ENCODE measurements at regions of chr13 and their contacts with region 1.

Region 1: GRCh38 chr13:42740753-42741152 is 40.6 kb upstream of the FAM216B start:
- DNase-seq: no peak
- H3K4me3 ChIP-seq: no peak overlapping the region
- H3K27me3 ChIP-seq: no peaks in the 10 kb centered on the region
- CTCF ChIP-seq: no peak

Region 2: DNA sequence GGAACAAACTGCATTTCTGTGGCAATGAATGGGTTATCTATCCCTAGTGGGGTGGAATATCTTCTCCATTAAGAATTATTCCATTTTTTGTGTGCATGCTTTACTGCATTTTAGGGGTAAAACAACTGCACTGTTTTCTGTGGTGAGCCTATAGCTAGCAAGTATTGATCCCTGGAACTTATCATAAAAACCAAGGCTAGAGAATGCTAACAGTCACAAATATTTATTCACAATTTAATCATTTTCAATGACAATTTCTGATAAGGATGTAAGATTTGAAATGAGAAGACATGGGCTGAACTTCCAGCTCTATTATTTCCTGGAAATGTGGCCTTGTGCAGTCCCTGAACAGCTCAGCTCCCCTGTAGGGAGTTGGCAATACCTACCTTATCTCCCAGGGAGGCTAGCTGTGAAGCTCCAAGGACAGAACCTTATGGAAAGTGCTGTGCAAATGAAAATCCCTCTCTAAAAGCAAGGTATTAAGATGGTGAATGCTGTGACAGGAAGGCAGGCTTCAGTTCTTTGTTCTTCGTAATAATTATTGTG is 10.8 kb before region 1 on chr13:
- CTCF ChIA-PET with region 1: interaction called, 10 read pairs
- POLR2A ChIA-PET with region 1: no interaction called
- DNase-seq: no peak
- H3K4me3 ChIP-seq: no peak overlapping the region
- H3K27me3 ChIP-seq: no peaks in the 10 kb centered on the region
- CTCF ChIP-seq: no peak

Region 3: GRCh38 chr13:43023289-43023951 is 282.7 kb after region 1 on chr13 and contains the start of gene DNAJC15:
- CTCF ChIA-PET with region 1: no interaction called
- POLR2A ChIA-PET with region 1: no interaction called
- DNase-seq: peak; percentile 30
- H3K4me3 ChIP-seq: peak within 1 kb of the TSS; percentile 75
- H3K27me3 ChIP-seq: no peaks in the 10 kb centered on the region
- CTCF ChIP-seq: peak; percentile 27; the same call in 1 of the 2 replicates
- polyA plus RNA-seq, gene DNAJC15: 63.6 and 63.9 TPM in 2 replicates